ENCODE measurements at regions of chr6 and their contacts with region 1.

Region 1: GRCh38 chr6:30955367-30956042 is 14.7 kb downstream of the MUCL3 start:
- DNase-seq: peak; percentile 58 to 84 (median 60)
- H3K4me3 ChIP-seq: peak overlapping the region; percentile 65
- H3K4me3 Mint-ChIP-seq: peak overlapping the region; percentile 84 to 94 (median 87)
- H3K27ac ChIP-seq: peak overlapping the region; percentile 45
- H3K27ac Mint-ChIP-seq: peak overlapping the region; percentile 82 to 94 (median 88)
- H3K4me1 ChIP-seq: peaks cover 17% of the 10 kb centered on the region
- H3K4me1 Mint-ChIP-seq: peaks cover 16 to 27% (median 26%) of the 10 kb centered on the region in 3 donors
- H3K27me3 ChIP-seq: no peaks in the 10 kb centered on the region
- H3K27me3 Mint-ChIP-seq: peaks cover 15 to 25% of the 10 kb centered on the region in 2 donors

Region 2: DNA sequence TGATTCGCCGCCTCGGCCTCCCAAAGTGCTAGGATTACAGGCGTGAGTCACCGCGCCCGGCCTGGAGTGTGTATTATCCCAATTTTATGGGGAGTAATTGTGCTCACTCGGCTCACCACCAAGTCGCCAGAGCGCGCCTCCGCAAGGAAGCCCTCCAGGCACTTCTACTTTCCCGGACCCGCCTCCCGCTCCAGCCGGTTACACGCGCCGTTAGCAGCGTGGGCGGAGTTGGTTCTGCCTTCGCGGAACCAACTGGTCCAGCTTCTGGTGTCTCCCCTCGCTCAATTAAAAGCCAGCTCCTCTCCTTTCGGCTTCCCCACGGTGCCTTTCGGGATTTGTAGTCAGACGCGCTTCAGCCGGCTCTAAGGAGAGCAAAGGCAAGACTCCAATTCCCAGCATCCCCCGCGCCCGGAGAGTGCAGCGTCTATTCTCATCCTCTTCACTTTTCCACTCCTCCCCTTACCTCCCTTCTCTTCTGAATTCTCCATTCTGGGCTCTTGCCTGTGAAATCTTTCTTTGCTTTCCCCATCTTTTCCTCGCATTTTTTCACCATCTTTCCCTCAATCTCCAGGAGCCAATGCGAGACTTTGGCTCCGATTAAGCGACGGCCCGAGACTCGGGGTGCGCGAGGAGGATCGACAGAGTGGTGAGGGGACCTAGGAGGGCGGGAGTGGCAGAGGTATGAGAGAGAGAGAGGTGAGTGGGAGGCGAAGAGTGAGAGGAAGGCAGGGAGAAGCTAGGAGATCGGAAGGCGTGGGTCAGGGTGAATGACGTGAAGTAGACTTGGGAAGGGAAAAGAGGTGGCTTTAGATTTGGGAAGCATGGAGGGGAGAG is 47.5 kb before region 1 on chr6 and contains the start of gene GTF2H4:
- CTCF ChIA-PET with region 1: interaction called, 4 read pairs
- POLR2A ChIA-PET with region 1: interaction called, 10 read pairs
- DNase-seq: peak; percentile 89 to 94 (median 90)
- H3K4me3 ChIP-seq: peak within 1 kb of the TSS; percentile 99
- H3K4me3 Mint-ChIP-seq: peak within 1 kb of the TSS; percentile 97 to 100 (median 99)
- H3K27ac ChIP-seq: peak within 1 kb of the TSS; percentile 66
- H3K27ac Mint-ChIP-seq: peak within 1 kb of the TSS; percentile 40 to 95 (median 92)
- H3K4me1 ChIP-seq: peaks cover 11% of the 10 kb centered on the region
- H3K4me1 Mint-ChIP-seq: peaks cover 20 to 28% (median 22%) of the 10 kb centered on the region in 3 donors
- H3K27me3 ChIP-seq: no peaks in the 10 kb centered on the region
- H3K27me3 Mint-ChIP-seq: no peaks in the 10 kb centered on the region
- total RNA-seq, gene GTF2H4: 48.2 to 55.3 TPM

Region 3: GRCh38 chr6:30914076-30914853 is 41.2 kb before region 1 on chr6 and contains the start of gene VARS2:
- CTCF ChIA-PET with region 1: interaction called, 7 read pairs
- POLR2A ChIA-PET with region 1: interaction called, 12 read pairs
- DNase-seq: peak; percentile 77 to 90 (median 87)
- H3K4me3 ChIP-seq: peak within 1 kb of the TSS; percentile 94
- H3K4me3 Mint-ChIP-seq: peak within 1 kb of the TSS; percentile 82 to 97 (median 93)
- H3K27ac ChIP-seq: peak within 1 kb of the TSS; percentile 68
- H3K27ac Mint-ChIP-seq: peak within 1 kb of the TSS; percentile 73 to 97 (median 90)
- H3K4me1 ChIP-seq: peaks cover 11% of the 10 kb centered on the region
- H3K4me1 Mint-ChIP-seq: peaks cover 31 to 49% (median 46%) of the 10 kb centered on the region in 3 donors
- H3K27me3 ChIP-seq: no peaks in the 10 kb centered on the region
- H3K27me3 Mint-ChIP-seq: peaks cover 0 to 3% of the 10 kb centered on the region in 2 donors
- total RNA-seq, gene VARS2: 82.4 to 86.0 TPM

Measured in CD8-positive, alpha-beta memory T cell (primary cell).